GM12878 (cell line): ENCODE measurements at regions of chr4 and their contacts with region 1.

Region 1: GRCh38 chr4:88823058-88823919 is 125.7 kb upstream of the NAP1L5 start:
- DNase-seq: peak; percentile 57
- ATAC-seq: peak; percentile 97
- H3K4me3 ChIP-seq: peak overlapping the region; percentile 64
- H3K27ac ChIP-seq: no peak overlapping the region
- H3K4me1 ChIP-seq: peaks cover 5% of the 10 kb centered on the region; the same call in 1 of the 2 replicates
- H3K27me3 ChIP-seq: no peaks in the 10 kb centered on the region
- CTCF ChIP-seq: no peak
- EP300 ChIP-seq: no peak
- POLR2A ChIP-seq: no peak
- RAD21 ChIP-seq: no peak

Region 2: GRCh38 chr4:87150498-87151261 is 1672.6 kb before region 1 on chr4:
- CTCF ChIA-PET with region 1: no interaction called
- POLR2A ChIA-PET with region 1: no interaction called
- RAD21 ChIA-PET with region 1: no interaction called
- SMC1A ChIA-PET with region 1: no interaction called
- in situ Hi-C with region 1: no loop called
- intact Hi-C with region 1: no loop called
- DNase-seq: peak; percentile 35
- ATAC-seq: peak; percentile 84
- H3K4me3 ChIP-seq: no peak overlapping the region
- H3K27ac ChIP-seq: no peak overlapping the region
- H3K4me1 ChIP-seq: no peaks in the 10 kb centered on the region
- H3K27me3 ChIP-seq: no peaks in the 10 kb centered on the region
- CTCF ChIP-seq: peak; percentile 82 to 92 (median 84)
- EP300 ChIP-seq: no peak
- POLR2A ChIP-seq: no peak
- RAD21 ChIP-seq: peak; percentile 90

Region 3: GRCh38 chr4:88533937-88534750 is 289.1 kb before region 1 on chr4:
- CTCF ChIA-PET with region 1: interaction called, 17 read pairs
- POLR2A ChIA-PET with region 1: no interaction called
- RAD21 ChIA-PET with region 1: interaction called, 5 read pairs
- SMC1A ChIA-PET with region 1: interaction called, 5 read pairs
- in situ Hi-C with region 1: no loop called
- intact Hi-C with region 1: no loop called
- DNase-seq: no peak
- ATAC-seq: no peak
- H3K4me3 ChIP-seq: no peak overlapping the region
- H3K27ac ChIP-seq: no peak overlapping the region
- H3K4me1 ChIP-seq: no peaks in the 10 kb centered on the region
- H3K27me3 ChIP-seq: no peaks in the 10 kb centered on the region
- CTCF ChIP-seq: no peak
- EP300 ChIP-seq: no peak
- POLR2A ChIP-seq: no peak
- RAD21 ChIP-seq: no peak

Region 4: GRCh38 chr4:88681209-88681608 is 142.1 kb before region 1 on chr4:
- CTCF ChIA-PET with region 1: no interaction called
- POLR2A ChIA-PET with region 1: no interaction called
- RAD21 ChIA-PET with region 1: no interaction called
- SMC1A ChIA-PET with region 1: no interaction called
- in situ Hi-C with region 1: no loop called
- intact Hi-C with region 1: no loop called
- DNase-seq: no peak
- ATAC-seq: no peak
- H3K4me3 ChIP-seq: no peak overlapping the region
- H3K27ac ChIP-seq: no peak overlapping the region
- H3K4me1 ChIP-seq: no peaks in the 10 kb centered on the region
- H3K27me3 ChIP-seq: no peaks in the 10 kb centered on the region
- CTCF ChIP-seq: no peak
- EP300 ChIP-seq: no peak
- POLR2A ChIP-seq: no peak
- RAD21 ChIP-seq: no peak

Region 5: DNA sequence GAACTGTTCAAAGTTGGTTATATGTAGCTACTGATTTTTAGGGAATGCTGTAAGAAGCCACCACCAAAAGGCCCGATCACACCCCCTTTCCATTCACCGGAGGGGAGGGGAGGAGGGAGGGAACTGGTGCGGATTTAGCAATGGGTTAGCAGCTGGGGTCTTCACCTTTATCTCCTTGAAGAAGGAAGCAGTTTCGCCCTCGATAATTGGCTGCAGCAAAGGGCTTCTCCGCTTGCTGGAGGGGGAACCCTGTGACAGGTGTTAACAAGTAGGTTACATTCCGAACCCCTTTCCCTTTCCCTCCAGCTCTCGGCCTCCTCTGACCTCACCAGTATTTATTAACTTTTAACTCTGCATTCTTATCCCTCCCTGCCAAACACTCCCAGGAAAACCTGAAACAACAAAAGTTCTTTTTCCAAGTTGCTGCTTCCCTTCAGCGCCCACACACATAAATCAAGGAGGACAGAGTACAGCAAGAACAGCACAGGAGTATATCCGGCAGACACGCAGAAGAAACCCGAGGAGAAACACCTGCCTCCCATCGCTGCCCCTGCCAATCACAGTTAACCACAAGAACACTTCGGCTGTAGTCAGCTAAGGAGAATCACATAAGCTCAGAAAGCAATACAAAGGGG is 85.9 kb before region 1 on chr4:
- CTCF ChIA-PET with region 1: no interaction called
- POLR2A ChIA-PET with region 1: no interaction called
- RAD21 ChIA-PET with region 1: no interaction called
- SMC1A ChIA-PET with region 1: no interaction called
- in situ Hi-C with region 1: no loop called
- intact Hi-C with region 1: no loop called
- DNase-seq: peak; percentile 13
- ATAC-seq: peak; percentile 48
- H3K4me3 ChIP-seq: 0 out of 2 replicates have a peak overlapping the region, but pooled peaks have one; percentile 21
- H3K27ac ChIP-seq: no peak overlapping the region
- H3K4me1 ChIP-seq: no peaks in the 10 kb centered on the region
- H3K27me3 ChIP-seq: no peaks in the 10 kb centered on the region
- CTCF ChIP-seq: no peak
- EP300 ChIP-seq: no peak
- POLR2A ChIP-seq: no peak
- RAD21 ChIP-seq: no peak

Region 6: GRCh38 chr4:88858752-88859151 is 35.5 kb after region 1 on chr4:
- CTCF ChIA-PET with region 1: interaction called, 6 read pairs
- POLR2A ChIA-PET with region 1: interaction called, 4 read pairs
- RAD21 ChIA-PET with region 1: interaction called, 6 read pairs
- SMC1A ChIA-PET with region 1: interaction called, 16 read pairs
- in situ Hi-C with region 1: no loop called
- intact Hi-C with region 1: no loop called
- DNase-seq: peak; percentile 61
- ATAC-seq: peak; percentile 96
- H3K4me3 ChIP-seq: no peak overlapping the region
- H3K27ac ChIP-seq: no peak overlapping the region
- H3K4me1 ChIP-seq: peaks cover 6% of the 10 kb centered on the region; the same call in 1 of the 2 replicates
- H3K27me3 ChIP-seq: no peaks in the 10 kb centered on the region
- CTCF ChIP-seq: no peak
- EP300 ChIP-seq: peak in 1 of 2 experiments; percentile 71; a peak in 2 of 4 replicates
- POLR2A ChIP-seq: no peak
- RAD21 ChIP-seq: no peak

Region 7: DNA sequence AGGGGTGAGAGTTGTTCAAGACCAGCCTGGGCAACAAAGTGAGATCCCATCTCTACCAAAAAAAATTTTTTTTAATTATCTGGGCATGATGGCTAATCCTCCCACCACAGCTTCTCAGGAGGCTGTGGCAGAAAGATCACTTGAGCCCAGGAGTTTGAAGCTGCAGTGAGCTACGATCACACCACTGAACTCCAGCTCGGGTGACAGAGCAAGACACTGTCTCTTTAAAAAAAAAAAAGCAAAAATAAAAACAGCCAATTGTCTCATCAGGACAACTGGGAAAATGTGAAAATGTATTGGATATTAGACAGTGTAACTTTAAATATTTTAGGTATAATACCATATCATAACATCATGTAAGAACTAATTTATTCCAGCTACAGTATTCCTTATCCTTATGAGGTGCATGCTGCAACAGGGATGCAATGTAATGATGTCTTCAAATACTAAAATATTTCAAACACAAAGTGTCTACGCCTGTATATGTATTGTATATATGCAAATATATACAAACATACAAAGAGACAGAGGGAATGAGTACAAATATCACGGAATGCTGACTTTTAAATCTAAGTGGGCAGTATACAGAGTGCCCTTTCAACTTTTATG is 216.5 kb after region 1 on chr4:
- CTCF ChIA-PET with region 1: interaction called, 12 read pairs
- POLR2A ChIA-PET with region 1: no interaction called
- RAD21 ChIA-PET with region 1: no interaction called
- SMC1A ChIA-PET with region 1: interaction called, 4 read pairs
- in situ Hi-C with region 1: no loop called
- intact Hi-C with region 1: no loop called
- DNase-seq: no peak
- ATAC-seq: no peak
- H3K4me3 ChIP-seq: no peak overlapping the region
- H3K27ac ChIP-seq: no peak overlapping the region
- H3K4me1 ChIP-seq: no peaks in the 10 kb centered on the region
- H3K27me3 ChIP-seq: no peaks in the 10 kb centered on the region
- CTCF ChIP-seq: no peak
- EP300 ChIP-seq: no peak
- POLR2A ChIP-seq: no peak
- RAD21 ChIP-seq: no peak

Region 8: DNA sequence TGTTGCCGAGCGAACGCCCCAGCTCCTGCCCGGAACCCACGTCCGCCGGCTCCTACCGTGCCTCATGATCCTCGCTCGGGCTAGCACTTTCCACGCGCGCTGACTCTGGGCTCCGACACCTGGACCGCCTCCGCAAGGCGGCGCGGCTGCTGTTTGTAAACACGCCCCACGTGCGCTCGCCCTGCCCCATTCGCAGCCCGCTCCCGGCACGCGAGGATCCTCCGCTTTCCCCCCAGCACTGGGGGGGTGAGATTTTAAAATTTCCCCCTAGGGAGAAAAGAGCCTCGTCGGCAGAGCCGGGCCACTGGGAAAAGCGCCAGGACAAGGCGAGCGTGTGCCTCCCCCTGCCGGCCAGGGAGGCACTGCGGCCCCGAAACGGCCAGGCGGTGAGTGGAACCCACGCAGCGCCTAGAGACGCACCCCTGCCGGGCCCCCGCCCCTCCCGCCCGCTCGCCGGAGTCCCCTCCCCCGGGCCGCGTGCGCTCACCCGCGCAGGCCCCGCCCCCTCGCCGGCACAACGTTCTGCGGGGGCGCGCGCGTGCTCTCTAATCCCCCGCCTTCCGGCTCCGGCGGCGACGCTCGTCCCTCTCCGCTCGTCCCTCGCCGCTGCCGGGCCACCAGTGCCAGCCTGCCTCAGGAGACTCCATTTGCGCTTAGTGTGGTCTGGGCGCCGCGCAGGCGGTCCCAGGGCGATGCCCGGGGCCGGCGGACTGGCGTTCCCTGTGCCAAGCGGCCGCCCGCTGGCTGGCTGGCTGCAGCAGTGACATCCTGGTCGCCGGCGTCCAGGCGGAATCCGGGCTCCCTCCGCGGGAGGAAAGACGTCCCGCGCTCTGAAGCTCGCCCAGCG is 287.9 kb after region 1 on chr4 and contains the start of gene TIGD2:
- CTCF ChIA-PET with region 1: interaction called, 9 read pairs
- POLR2A ChIA-PET with region 1: no interaction called
- RAD21 ChIA-PET with region 1: interaction called, 3 read pairs
- SMC1A ChIA-PET with region 1: interaction called, 8 read pairs
- in situ Hi-C with region 1: loop called (anchors 10 kb)
- intact Hi-C with region 1: loop called (anchors 2 kb)
- DNase-seq: peak; percentile 47
- ATAC-seq: peak; percentile 94
- H3K4me3 ChIP-seq: peak within 1 kb of the TSS; percentile 95
- H3K27ac ChIP-seq: peak within 1 kb of the TSS; percentile 47
- H3K4me1 ChIP-seq: 0 out of 2 replicates have a peak, but pooled peaks cover 3% of the 10 kb centered on the region
- H3K27me3 ChIP-seq: no peaks in the 10 kb centered on the region
- CTCF ChIP-seq: peak; percentile 66 to 83 (median 75)
- EP300 ChIP-seq: no peak
- POLR2A ChIP-seq: peak; percentile 98
- RAD21 ChIP-seq: peak; percentile 60
- polyA plus RNA-seq, gene TIGD2: 2.4 to 3.6 TPM

Region 9: GRCh38 chr4:89226665-89227574 is 403.6 kb after region 1 on chr4:
- CTCF ChIA-PET with region 1: interaction called, 17 read pairs
- POLR2A ChIA-PET with region 1: no interaction called
- RAD21 ChIA-PET with region 1: no interaction called
- SMC1A ChIA-PET with region 1: interaction called, 4 read pairs
- in situ Hi-C with region 1: no loop called
- intact Hi-C with region 1: no loop called
- DNase-seq: peak; percentile 4
- ATAC-seq: peak; percentile 92
- H3K4me3 ChIP-seq: no peak overlapping the region
- H3K27ac ChIP-seq: no peak overlapping the region
- H3K4me1 ChIP-seq: no peaks in the 10 kb centered on the region
- H3K27me3 ChIP-seq: no peaks in the 10 kb centered on the region; a peak in 1 of 4 replicates
- CTCF ChIP-seq: peak; percentile 69 to 77 (median 71)
- EP300 ChIP-seq: no peak
- POLR2A ChIP-seq: no peak
- RAD21 ChIP-seq: peak; percentile 68

Region 10: GRCh38 chr4:90718931-90719330 is 1895.6 kb after region 1 on chr4:
- CTCF ChIA-PET with region 1: no interaction called
- POLR2A ChIA-PET with region 1: no interaction called
- RAD21 ChIA-PET with region 1: no interaction called
- SMC1A ChIA-PET with region 1: no interaction called
- in situ Hi-C with region 1: no loop called
- intact Hi-C with region 1: no loop called
- DNase-seq: no peak
- ATAC-seq: no peak
- H3K4me3 ChIP-seq: no peak overlapping the region
- H3K27ac ChIP-seq: no peak overlapping the region
- H3K4me1 ChIP-seq: no peaks in the 10 kb centered on the region
- H3K27me3 ChIP-seq: no peaks in the 10 kb centered on the region
- CTCF ChIP-seq: no peak
- EP300 ChIP-seq: no peak
- POLR2A ChIP-seq: no peak
- RAD21 ChIP-seq: no peak